ENCODE measurements at regions of chr16 and their contacts with region 1.

Region 1: GRCh38 chr16:7423434-7424044 is 90.9 kb downstream of the RBFOX1 start:
- DNase-seq: no peak
- ATAC-seq: no peak
- H3K4me3 ChIP-seq: no peak overlapping the region
- H3K27ac ChIP-seq: no peak overlapping the region
- H3K4me1 ChIP-seq: peaks cover 54% of the 10 kb centered on the region
- H3K27me3 ChIP-seq: peaks cover 0 to 2% (median 0%) of the 10 kb centered on the region in 3 donors
- CTCF ChIP-seq: no peak

Region 2: GRCh38 chr16:6827267-6827666 is 596.3 kb before region 1 on chr16:
- intact Hi-C with region 1: no loop called
- DNase-seq: no peak
- ATAC-seq: no peak
- H3K4me3 ChIP-seq: no peak overlapping the region
- H3K27ac ChIP-seq: no peak overlapping the region
- H3K4me1 ChIP-seq: no peaks in the 10 kb centered on the region
- H3K27me3 ChIP-seq: no peaks in the 10 kb centered on the region
- CTCF ChIP-seq: no peak

Region 3: GRCh38 chr16:7602291-7602950 is 178.9 kb after region 1 on chr16:
- intact Hi-C with region 1: loop called in 1 of 2 experiments (anchors 10 kb)
- DNase-seq: no peak
- ATAC-seq: no peak
- H3K4me3 ChIP-seq: no peak overlapping the region
- H3K27ac ChIP-seq: peak overlapping the region; percentile 38
- H3K4me1 ChIP-seq: peaks cover 44% of the 10 kb centered on the region
- H3K27me3 ChIP-seq: no peaks in the 10 kb centered on the region
- CTCF ChIP-seq: no peak

Region 4: DNA sequence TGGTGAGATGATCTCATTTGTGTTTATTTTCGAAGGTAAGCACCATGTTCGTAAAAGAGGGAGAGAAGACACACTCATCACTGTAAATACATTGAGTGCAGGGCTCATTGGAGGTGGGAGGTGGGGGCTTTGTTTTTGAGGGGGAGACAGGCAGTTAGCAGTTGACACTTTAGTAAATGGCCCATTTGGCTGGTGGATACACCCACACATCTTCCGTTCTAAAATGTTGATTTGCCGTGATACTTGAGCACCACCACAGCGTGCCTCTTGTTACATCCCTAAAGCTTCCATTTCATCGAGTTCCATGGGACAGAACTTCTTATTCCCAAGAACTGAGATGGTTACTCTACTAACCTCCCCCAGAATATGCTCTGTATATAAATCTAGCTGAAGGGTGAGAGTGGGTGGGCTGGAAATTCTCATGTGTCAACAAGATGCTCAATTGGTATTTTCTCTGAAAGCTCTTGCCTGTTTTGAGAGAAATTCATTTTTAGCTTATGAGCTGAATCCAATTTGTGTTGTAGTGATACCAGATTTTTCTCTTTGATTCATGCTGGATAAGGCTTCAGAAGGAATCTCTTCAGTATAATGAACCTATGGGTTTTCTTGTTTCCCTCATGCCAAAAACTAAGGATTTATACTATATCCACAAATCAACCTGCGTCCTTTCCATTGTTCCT is 223.4 kb after region 1 on chr16:
- intact Hi-C with region 1: no loop called
- DNase-seq: no peak
- ATAC-seq: no peak
- H3K4me3 ChIP-seq: no peak overlapping the region
- H3K27ac ChIP-seq: no peak overlapping the region
- H3K4me1 ChIP-seq: no peaks in the 10 kb centered on the region
- H3K27me3 ChIP-seq: no peaks in the 10 kb centered on the region
- CTCF ChIP-seq: no peak

Measured in psoas muscle (tissue), 8 donors.